ENCODE measurements at regions of chr15 and their contacts with region 1.

Region 1: GRCh38 chr15:52179278-52180195 is 11.7 kb downstream of the GNB5 start:
- DNase-seq: peak; percentile 78 to 84
- ATAC-seq: peak; percentile 74 to 85 (median 79)
- H3K4me3 ChIP-seq: peak overlapping the region; percentile 82
- H3K27ac ChIP-seq: peak overlapping the region; percentile 55
- H3K4me1 ChIP-seq: no peaks in the 10 kb centered on the region
- H3K27me3 ChIP-seq: peaks cover 0 to 31% (median 2%) of the 10 kb centered on the region in 3 donors
- CTCF ChIP-seq: no peak

Region 2: GRCh38 chr15:51499379-51499976 is 680.1 kb before region 1 on chr15:
- intact Hi-C with region 1: no loop called
- DNase-seq: no peak
- ATAC-seq: no peak
- H3K4me3 ChIP-seq: no peak overlapping the region
- H3K27ac ChIP-seq: no peak overlapping the region
- H3K4me1 ChIP-seq: no peaks in the 10 kb centered on the region
- H3K27me3 ChIP-seq: no peaks in the 10 kb centered on the region
- CTCF ChIP-seq: no peak

Region 3: GRCh38 chr15:51829360-51830275 is 349.9 kb before region 1 on chr15 and contains the start of gene TMOD3:
- intact Hi-C with region 1: no loop called
- DNase-seq: peak; percentile 92 to 95
- ATAC-seq: peak; percentile 98 to 100 (median 99)
- H3K4me3 ChIP-seq: peak within 1 kb of the TSS; percentile 98
- H3K27ac ChIP-seq: peak within 1 kb of the TSS; percentile 86
- H3K4me1 ChIP-seq: peaks cover 32% of the 10 kb centered on the region
- H3K27me3 ChIP-seq: no peaks in the 10 kb centered on the region
- CTCF ChIP-seq: no peak
- total RNA-seq, gene TMOD3: 6.4 to 22.6 (median 7.9) TPM

Region 4: DNA sequence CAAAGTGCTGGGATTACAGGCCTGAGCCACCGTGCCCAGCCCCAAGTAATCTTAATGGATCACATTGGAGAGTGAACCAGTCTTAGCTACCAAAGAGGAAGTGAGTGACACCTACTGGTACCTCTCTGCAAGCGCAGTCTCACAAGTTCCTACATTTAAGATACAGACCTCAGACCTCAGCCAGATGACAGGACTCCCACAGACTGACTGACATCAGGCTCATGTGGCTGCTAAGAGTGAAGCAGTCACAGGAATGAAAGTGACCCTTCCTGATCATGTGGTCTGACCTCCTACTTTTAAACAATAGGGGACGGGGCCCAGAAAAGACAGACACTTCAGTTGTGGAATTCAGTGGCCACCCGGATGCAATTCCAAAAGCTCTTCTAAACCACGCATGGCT is 47.9 kb after region 1 on chr15:
- intact Hi-C with region 1: loop called (anchors 5 kb)
- DNase-seq: peak in 1 of 2 donors; percentile 50
- ATAC-seq: peak; percentile 87 to 95 (median 91)
- H3K4me3 ChIP-seq: no peak overlapping the region
- H3K27ac ChIP-seq: no peak overlapping the region
- H3K4me1 ChIP-seq: no peaks in the 10 kb centered on the region
- H3K27me3 ChIP-seq: no peaks in the 10 kb centered on the region
- CTCF ChIP-seq: peak; percentile 81